HepG2 (cell line): ENCODE measurements at regions of chrX and their contacts with region 1.

Region 1: DNA sequence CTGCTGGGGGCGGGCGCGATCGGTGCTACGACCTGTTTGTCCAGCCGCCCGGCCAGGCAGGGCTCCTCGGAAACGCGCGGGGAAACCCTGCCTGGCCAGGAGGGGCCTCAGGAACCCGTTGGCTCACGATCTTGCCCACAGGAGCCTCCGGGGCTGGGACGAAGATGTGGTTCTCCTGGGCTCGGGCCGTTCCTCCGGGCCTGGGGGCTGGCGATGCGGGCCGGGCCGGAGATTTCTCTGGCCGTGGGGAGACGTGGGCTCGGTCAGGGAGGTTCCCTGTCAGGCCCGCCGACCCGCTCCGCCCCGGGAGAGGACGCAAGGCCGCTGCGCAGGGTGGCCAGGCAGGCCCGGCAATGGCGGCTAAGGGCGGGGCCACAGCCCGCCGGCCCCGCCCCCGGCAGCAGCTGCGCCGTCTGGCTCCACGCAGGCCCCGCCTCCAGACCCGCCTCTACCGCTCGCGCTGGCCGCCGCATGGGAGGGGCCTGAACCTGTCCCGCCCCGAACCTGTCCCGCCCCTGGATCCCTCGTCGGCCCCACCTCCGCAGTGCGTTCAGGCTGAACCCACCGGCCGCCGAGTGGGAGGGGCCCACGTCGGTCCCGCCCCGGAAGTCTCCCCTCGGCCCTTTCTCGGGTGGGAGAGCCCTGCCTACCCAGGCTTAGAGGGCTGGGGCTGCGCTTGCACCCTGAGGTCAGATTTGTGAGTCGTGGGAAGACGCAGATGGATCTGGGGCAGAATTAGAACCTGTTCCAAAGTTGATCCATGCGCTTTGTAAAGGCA is at the start of gene FAM3A:
- DNase-seq: peak; percentile 68
- ATAC-seq: peak; percentile 83
- H3K4me3 ChIP-seq: peak within 1 kb of the TSS; percentile 60 to 78 (median 74); a peak in 5 of 6 replicates
- H3K27ac ChIP-seq: peak within 1 kb of the TSS; percentile 86
- H3K4me1 ChIP-seq: peaks cover 25% of the 10 kb centered on the region
- H3K27me3 ChIP-seq: no peaks in the 10 kb centered on the region
- CTCF ChIP-seq: no peak
- EP300 ChIP-seq: no peak
- POLR2A ChIP-seq: peak; percentile 53 to 67; a peak in 3 of 4 replicates
- RAD21 ChIP-seq: no peak
- total RNA-seq, gene FAM3A: 6.7 and 11.2 TPM in 2 replicates

Region 2: GRCh38 chrX:154478728-154479622 is 37.1 kb before region 1 on chrX and contains the start of gene LAGE3:
- CTCF ChIA-PET with region 1: no interaction called
- POLR2A ChIA-PET with region 1: interaction called, 11 read pairs
- in situ Hi-C with region 1: loop called (anchors 5 kb)
- intact Hi-C with region 1: no loop called
- DNase-seq: peak; percentile 60
- ATAC-seq: peak; percentile 88
- H3K4me3 ChIP-seq: peak within 1 kb of the TSS; percentile 12 to 60 (median 57); a peak in 5 of 6 replicates
- H3K27ac ChIP-seq: no peak within 1 kb of the TSS
- H3K4me1 ChIP-seq: peaks cover 8% of the 10 kb centered on the region
- H3K27me3 ChIP-seq: no peaks in the 10 kb centered on the region
- CTCF ChIP-seq: no peak
- EP300 ChIP-seq: no peak
- POLR2A ChIP-seq: 0 out of 4 replicates have a peak, but pooled peaks of 1 of the 2 experiments have one; percentile 17
- RAD21 ChIP-seq: no peak
- total RNA-seq, gene LAGE3: 12.7 and 13.0 TPM in 2 replicates

Region 3: DNA sequence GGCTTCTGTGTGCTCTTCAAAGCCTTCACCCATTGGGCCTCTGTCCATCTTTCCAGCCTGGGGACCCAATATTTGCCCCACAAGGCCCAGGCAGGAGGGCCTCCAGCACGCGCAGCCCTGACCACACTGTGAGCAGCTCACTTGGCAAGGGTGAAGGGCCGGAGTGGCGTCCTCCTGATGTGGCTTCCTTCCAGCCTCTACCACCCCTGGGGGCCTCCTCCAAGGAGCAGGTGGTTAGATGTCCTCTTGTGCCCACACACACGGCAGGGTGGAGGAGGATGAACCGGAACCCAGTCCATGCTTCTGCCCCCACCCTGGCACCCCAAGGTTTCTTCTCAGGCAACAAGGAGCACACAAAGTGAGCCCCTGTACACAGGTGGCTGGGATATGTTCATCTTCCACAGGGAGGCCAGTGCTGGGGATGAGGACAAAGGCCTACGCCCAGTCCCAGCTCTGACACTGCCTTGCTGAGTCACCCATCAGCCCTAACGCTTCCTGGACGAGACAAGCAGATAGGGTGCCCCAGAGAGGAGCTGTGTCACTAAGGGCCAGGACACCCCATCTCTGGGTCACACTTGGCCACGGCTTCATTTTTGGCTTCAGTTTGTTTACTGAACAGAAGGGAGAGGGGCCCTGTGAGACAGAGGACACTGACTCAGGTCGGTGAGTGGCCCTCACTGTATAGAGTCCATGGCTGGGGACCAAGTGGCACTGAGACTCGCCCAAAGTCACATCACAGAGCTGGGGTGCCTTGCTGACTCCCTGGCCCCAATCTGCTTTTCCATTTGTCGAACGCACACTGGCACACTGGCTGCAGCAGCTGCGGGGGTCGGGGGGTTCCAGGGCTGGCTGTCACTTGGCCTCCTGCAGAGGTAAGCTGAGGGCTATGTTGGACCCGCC is 31.6 kb before region 1 on chrX:
- CTCF ChIA-PET with region 1: no interaction called
- POLR2A ChIA-PET with region 1: interaction called, 31 read pairs
- in situ Hi-C with region 1: loop called (anchors 5 kb)
- intact Hi-C with region 1: no loop called
- DNase-seq: no peak
- ATAC-seq: no peak
- H3K4me3 ChIP-seq: no peak overlapping the region
- H3K27ac ChIP-seq: no peak overlapping the region
- H3K4me1 ChIP-seq: peaks cover 25% of the 10 kb centered on the region
- H3K27me3 ChIP-seq: no peaks in the 10 kb centered on the region
- CTCF ChIP-seq: no peak
- EP300 ChIP-seq: no peak
- POLR2A ChIP-seq: no peak
- RAD21 ChIP-seq: no peak

Region 4: GRCh38 chrX:154490414-154491083 is 25.5 kb before region 1 on chrX and contains the start of gene SLC10A3:
- CTCF ChIA-PET with region 1: no interaction called
- POLR2A ChIA-PET with region 1: interaction called, 31 read pairs
- in situ Hi-C with region 1: no loop called
- intact Hi-C with region 1: no loop called
- DNase-seq: peak; percentile 87
- ATAC-seq: peak; percentile 92
- H3K4me3 ChIP-seq: peak within 1 kb of the TSS; percentile 68 to 78 (median 72)
- H3K27ac ChIP-seq: peak within 1 kb of the TSS; percentile 73
- H3K4me1 ChIP-seq: peaks cover 12% of the 10 kb centered on the region
- H3K27me3 ChIP-seq: no peaks in the 10 kb centered on the region
- CTCF ChIP-seq: peak; percentile 59
- EP300 ChIP-seq: no peak
- POLR2A ChIP-seq: peak in 1 of 2 experiments; percentile 70; a peak in 2 of 4 replicates
- RAD21 ChIP-seq: no peak
- total RNA-seq, gene SLC10A3: 10.1 and 10.8 TPM in 2 replicates

Region 5: DNA sequence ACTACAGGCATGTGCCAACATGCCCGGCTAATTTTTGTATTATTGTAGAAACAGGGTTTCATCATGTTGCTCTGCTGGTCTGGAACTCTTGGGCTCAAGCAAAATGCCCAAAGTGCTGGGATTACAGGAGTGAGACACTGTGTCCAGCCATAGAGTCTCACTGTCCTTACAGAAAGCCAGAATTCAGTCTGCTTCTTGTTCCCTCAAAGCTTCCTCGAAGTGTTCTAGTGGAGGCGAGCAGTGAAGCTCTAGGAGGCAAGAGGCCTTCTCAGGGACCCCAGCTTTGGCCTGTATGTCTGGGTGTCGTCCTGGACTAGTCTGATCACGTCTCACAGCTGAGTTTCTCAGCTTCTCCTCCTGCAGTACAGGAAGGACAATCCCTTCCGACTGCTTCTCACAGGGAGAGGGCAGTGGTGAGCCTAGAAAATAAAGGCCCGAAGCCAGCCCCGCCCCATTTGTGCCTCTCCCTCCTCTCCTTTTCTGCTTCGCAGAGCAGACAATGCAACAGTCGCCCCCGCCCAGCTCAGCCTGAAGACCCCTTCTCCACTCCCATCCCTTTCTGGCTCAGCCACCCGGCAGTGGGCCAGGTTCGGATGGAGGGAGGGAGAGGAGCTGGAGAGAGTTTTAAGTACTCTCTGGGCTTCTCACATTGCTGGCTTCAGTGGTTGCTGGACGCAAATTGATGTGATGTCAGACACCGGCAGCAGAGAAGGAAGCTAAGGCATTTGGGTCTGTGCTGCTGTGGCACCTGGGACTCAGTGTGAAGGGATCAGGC is 11.0 kb after region 1 on chrX:
- CTCF ChIA-PET with region 1: no interaction called
- POLR2A ChIA-PET with region 1: interaction called, 34 read pairs
- in situ Hi-C with region 1: no loop called
- intact Hi-C with region 1: no loop called
- DNase-seq: peak; percentile 56
- ATAC-seq: peak; percentile 78
- H3K4me3 ChIP-seq: peak overlapping the region; percentile 37 to 63 (median 40); a peak in 5 of 6 replicates
- H3K27ac ChIP-seq: peak overlapping the region; percentile 63
- H3K4me1 ChIP-seq: peaks cover 62% of the 10 kb centered on the region
- H3K27me3 ChIP-seq: no peaks in the 10 kb centered on the region
- CTCF ChIP-seq: peak; percentile 68
- EP300 ChIP-seq: no peak
- POLR2A ChIP-seq: no peak
- RAD21 ChIP-seq: no peak

Region 6: GRCh38 chrX:154541724-154542467 is 25.8 kb after region 1 on chrX:
- CTCF ChIA-PET with region 1: no interaction called
- POLR2A ChIA-PET with region 1: interaction called, 29 read pairs
- in situ Hi-C with region 1: no loop called
- intact Hi-C with region 1: no loop called
- DNase-seq: peak; percentile 94
- ATAC-seq: peak; percentile 59
- H3K4me3 ChIP-seq: peak overlapping the region; percentile 54 to 78 (median 72); a peak in 5 of 6 replicates
- H3K27ac ChIP-seq: peak overlapping the region; percentile 100
- H3K4me1 ChIP-seq: peaks cover 66% of the 10 kb centered on the region
- H3K27me3 ChIP-seq: no peaks in the 10 kb centered on the region; a peak in 1 of 5 replicates
- CTCF ChIP-seq: no peak
- EP300 ChIP-seq: peak in 1 of 2 experiments; percentile 93; a peak in 2 of 4 replicates
- POLR2A ChIP-seq: no peak; a peak in 2 of 4 replicates
- RAD21 ChIP-seq: no peak